ENCODE measurements at regions of chr2 and their contacts with region 1.

Region 1: DNA sequence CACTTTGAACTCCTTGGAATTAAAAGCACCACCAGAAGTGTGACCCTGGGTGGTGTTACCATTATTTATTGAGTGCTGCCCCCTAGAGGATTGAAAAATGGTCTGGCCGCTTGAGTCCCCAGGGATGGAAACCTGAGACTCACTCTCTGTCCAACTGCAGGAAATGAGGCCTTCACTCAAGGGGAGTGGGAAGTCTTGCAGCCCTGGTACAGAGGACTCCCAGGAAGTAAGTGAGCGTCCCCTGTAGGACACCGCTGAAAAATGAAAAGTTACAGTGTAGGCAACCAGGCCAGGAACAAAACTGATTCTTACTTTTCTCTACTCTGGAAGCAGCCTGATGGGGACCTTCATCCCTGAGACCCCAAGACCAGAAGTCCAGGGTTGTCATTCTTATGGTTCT is 2.2 kb upstream of the NRP2 start:
- DNase-seq: peak; percentile 70
- H3K4me3 ChIP-seq: peak overlapping the region in 1 of 2 experiments; percentile 2; a peak in 1 of 4 replicates
- H3K27ac ChIP-seq: peak overlapping the region; percentile 17 to 34; a peak in 2 of 4 replicates
- H3K4me1 ChIP-seq: peaks cover 17 to 27% of the 10 kb centered on the region in 2 experiments
- H3K27me3 ChIP-seq: no peaks in the 10 kb centered on the region
- CTCF ChIP-seq: peak; percentile 82
- EP300 ChIP-seq: no peak
- RAD21 ChIP-seq: peak; percentile 78

Region 2: GRCh38 chr2:204691911-204692510 is 988.1 kb before region 1 on chr2:
- CTCF ChIA-PET with region 1: interaction called, 12 read pairs
- POLR2A ChIA-PET with region 1: no interaction called
- DNase-seq: peak; percentile 34
- H3K4me3 ChIP-seq: no peak overlapping the region; a peak in 1 of 4 replicates
- H3K27ac ChIP-seq: no peak overlapping the region
- H3K4me1 ChIP-seq: no peaks in the 10 kb centered on the region; a peak in 1 of 4 replicates
- H3K27me3 ChIP-seq: no peaks in the 10 kb centered on the region
- CTCF ChIP-seq: peak; percentile 82
- EP300 ChIP-seq: no peak
- RAD21 ChIP-seq: peak; percentile 93

Region 3: DNA sequence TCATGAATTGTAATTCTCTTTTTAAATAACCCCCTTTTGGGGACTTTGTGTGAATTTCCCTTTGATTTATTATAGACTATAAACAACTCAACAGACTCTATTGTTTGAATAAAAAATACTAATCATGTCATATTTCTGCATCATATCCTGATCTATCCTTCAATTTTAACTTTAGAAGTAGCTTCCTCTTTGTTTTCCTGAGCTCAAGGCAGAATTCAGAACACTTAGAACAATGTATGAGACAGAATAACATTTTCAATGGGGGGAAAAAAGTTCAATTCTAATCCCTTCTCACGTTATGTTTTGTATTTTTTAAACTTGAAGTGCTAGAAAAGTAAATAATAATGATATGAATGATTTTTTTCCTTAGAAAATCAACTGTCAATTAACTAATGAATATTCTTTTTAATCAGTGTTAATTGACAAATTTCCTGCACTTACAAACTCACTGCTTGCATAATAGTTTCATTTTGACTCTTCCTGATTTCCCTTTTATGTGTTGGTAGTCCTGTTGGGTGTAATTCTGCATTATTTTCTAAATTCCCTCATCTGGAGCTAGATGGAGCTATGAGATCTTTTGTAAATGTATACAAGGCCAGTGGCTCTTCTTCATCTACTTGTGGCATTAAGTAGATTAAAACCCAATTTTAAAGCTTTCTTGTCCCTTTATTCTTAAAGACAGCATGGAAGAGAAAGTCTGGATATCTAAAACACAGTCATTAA is 808.7 kb before region 1 on chr2:
- CTCF ChIA-PET with region 1: interaction called, 91 read pairs
- POLR2A ChIA-PET with region 1: no interaction called
- DNase-seq: peak; percentile 23
- H3K4me3 ChIP-seq: no peak overlapping the region
- H3K27ac ChIP-seq: no peak overlapping the region
- H3K4me1 ChIP-seq: peaks cover 0 to 3% of the 10 kb centered on the region in 2 experiments; a peak in 2 of 4 replicates
- H3K27me3 ChIP-seq: no peaks in the 10 kb centered on the region
- CTCF ChIP-seq: peak; percentile 63
- EP300 ChIP-seq: no peak
- RAD21 ChIP-seq: peak; percentile 90

Region 4: DNA sequence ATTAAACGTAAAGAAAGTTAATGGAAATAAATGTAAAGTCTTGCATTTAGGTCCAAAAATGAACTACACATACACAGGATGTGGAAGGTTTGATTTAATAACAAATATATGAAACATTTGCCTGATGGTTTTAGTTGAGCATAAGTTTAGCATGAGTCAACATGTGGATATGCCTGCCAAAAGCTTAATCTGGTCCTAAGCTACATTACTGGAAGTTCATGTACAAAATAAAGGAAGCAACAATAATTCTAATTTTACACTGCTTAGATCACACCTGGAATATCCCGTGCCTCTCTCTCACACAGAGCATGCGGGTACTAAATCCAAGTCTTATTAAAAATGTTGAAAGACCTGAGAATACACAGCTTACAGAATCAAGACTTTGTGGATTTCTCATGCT is 274.3 kb before region 1 on chr2:
- CTCF ChIA-PET with region 1: interaction called, 12 read pairs
- POLR2A ChIA-PET with region 1: no interaction called
- DNase-seq: no peak
- H3K4me3 ChIP-seq: peak overlapping the region in 1 of 2 experiments; percentile 30; a peak in 1 of 4 replicates
- H3K27ac ChIP-seq: peak overlapping the region; percentile 89 to 93
- H3K4me1 ChIP-seq: peaks cover 14 to 23% of the 10 kb centered on the region in 2 experiments
- H3K27me3 ChIP-seq: no peaks in the 10 kb centered on the region
- CTCF ChIP-seq: no peak
- EP300 ChIP-seq: peak in 1 of 2 experiments; percentile 83; a peak in 2 of 4 replicates
- RAD21 ChIP-seq: no peak

Region 5: DNA sequence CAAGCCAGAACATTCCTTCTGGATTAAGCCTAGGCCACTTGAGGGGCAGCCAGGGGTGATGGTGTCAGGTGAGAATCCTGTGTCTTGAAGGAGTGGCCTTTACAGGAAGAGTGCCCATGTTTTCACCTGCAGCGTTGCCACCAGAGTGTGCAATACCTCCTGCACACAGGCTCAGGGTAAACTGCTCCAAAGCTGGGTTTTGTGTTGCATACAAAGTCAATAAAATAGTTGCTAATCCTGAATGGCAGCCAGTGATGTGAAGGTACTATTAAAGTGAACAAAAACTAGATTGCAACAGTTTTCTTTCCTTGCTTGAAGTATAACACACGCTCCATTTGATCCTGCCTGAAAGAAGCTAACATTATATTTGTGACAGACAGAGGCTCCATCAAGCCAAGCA is 62.2 kb before region 1 on chr2:
- CTCF ChIA-PET with region 1: interaction called, 14 read pairs
- POLR2A ChIA-PET with region 1: no interaction called
- DNase-seq: no peak
- H3K4me3 ChIP-seq: no peak overlapping the region
- H3K27ac ChIP-seq: no peak overlapping the region
- H3K4me1 ChIP-seq: peaks cover 0 to 12% of the 10 kb centered on the region in 2 experiments; a peak in 2 of 4 replicates
- H3K27me3 ChIP-seq: no peaks in the 10 kb centered on the region
- CTCF ChIP-seq: no peak
- EP300 ChIP-seq: no peak
- RAD21 ChIP-seq: no peak

Region 6: GRCh38 chr2:205665806-205666205 is 14.3 kb before region 1 on chr2:
- CTCF ChIA-PET with region 1: interaction called, 10 read pairs
- POLR2A ChIA-PET with region 1: no interaction called
- DNase-seq: no peak
- H3K4me3 ChIP-seq: no peak overlapping the region
- H3K27ac ChIP-seq: no peak overlapping the region
- H3K4me1 ChIP-seq: peaks cover 0 to 6% of the 10 kb centered on the region in 2 experiments; a peak in 2 of 4 replicates
- H3K27me3 ChIP-seq: no peaks in the 10 kb centered on the region
- CTCF ChIP-seq: no peak
- EP300 ChIP-seq: no peak
- RAD21 ChIP-seq: no peak

Region 7: DNA sequence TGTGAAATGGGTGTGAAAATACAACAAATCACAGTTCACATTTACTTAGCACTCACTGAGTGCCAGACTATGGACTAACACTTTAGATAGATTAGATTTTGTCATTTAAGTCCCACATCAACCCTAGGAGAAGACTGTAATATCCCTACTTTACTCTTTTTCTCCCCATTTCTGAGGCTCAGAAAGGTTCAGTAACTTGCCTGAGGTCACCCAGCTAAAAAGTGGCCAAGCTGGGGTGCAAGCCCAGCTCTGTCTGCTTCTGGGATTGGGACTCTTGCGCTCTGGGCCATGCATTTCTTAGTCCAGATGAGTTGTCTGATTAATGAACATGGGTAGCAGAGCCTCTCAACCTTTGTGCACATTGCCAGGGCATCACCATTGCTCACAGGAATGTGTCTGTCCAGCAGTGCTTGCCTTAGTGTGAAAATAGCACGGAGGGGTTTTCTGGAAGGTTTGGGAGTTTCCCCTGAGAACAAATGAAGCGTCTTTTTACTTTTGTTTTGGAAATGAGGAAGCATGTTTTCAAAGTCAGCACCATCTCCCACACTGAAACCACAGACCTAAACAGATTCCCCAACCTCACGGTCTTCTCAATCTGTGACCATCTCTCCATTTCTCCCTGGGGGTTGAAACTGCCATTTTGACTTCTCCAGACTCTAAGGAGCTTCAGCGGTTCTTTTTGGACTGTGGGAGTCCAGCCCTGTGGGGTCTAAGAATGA is 34.1 kb after region 1 on chr2:
- CTCF ChIA-PET with region 1: no interaction called
- POLR2A ChIA-PET with region 1: no interaction called
- DNase-seq: no peak
- H3K4me3 ChIP-seq: no peak overlapping the region
- H3K27ac ChIP-seq: no peak overlapping the region
- H3K4me1 ChIP-seq: peaks cover 19 to 27% of the 10 kb centered on the region in 2 experiments
- H3K27me3 ChIP-seq: no peaks in the 10 kb centered on the region
- CTCF ChIP-seq: no peak
- EP300 ChIP-seq: no peak
- RAD21 ChIP-seq: no peak

Measured in SK-N-SH (cell line).